Posterior vena cava (tissue), 2 donors: ENCODE measurements at regions of chr10 and their contacts with region 1.

Region 1: GRCh38 chr10:49359349-49360270 is 36.3 kb downstream of the DRGX start:
- DNase-seq: peak; percentile 54

Region 2: GRCh38 chr10:49268177-49268576 is 91.4 kb before region 1 on chr10:
- intact Hi-C with region 1: loop called in 1 of 2 experiments (anchors 10 kb)
- DNase-seq: no peak